ENCODE measurements at regions of chr4 and their contacts with region 1.

Region 1: DNA sequence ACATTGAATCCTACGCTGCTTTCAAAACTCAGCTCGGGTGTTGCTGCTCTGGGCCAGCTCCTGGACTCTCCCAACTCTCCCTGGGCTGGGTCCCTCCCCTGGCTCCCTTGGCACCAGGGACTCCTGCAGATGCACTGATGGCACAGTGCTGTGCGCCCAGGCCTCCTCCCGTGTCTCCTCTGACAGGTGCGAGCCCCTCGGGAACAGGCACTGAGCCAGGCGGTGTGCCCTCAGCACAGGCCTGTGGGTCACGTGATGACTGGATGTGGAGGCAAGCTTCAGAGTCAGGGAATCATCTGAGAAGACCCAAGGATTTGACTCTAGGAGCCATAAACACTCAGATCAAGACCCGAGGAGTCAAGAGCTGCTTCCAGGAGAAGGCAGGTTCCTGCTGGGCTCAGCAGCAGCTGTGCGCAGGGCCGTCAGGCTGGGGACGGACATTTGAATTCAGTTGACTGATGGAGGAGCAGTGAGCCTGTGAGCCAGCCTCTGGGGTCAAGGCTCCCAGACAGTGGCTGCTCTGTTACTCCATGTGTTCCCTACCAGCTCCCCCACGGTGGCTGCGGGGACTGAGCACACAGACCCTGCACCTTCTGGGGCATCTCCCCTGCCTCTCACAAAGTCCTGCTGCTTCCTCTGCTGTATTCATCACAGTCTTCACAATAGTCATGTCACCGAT is 33.0 kb downstream of the NAT8L start:
- DNase-seq: no peak

Region 2: GRCh38 chr4:2024683-2025082 is 67.4 kb before region 1 on chr4:
- in situ Hi-C with region 1: no loop called
- DNase-seq: no peak

Region 3: GRCh38 chr4:2159931-2160330 is 67.8 kb after region 1 on chr4:
- in situ Hi-C with region 1: loop called (anchors 5 kb)
- DNase-seq: no peak

Measured in G401 (cell line).